ENCODE measurements at regions of chr19 and their contacts with region 1.

Region 1: GRCh38 chr19:41353466-41354342 is at the start of gene TGFB1:
- DNase-seq: peak; percentile 94 to 99 (median 98)
- ATAC-seq: peak; percentile 74
- H3K4me3 ChIP-seq: peak within 1 kb of the TSS; percentile 98
- H3K27ac ChIP-seq: peak within 1 kb of the TSS; percentile 93
- H3K4me1 ChIP-seq: peaks cover 11 to 49% of the 10 kb centered on the region in 2 experiments
- H3K27me3 ChIP-seq: no peaks in the 10 kb centered on the region
- CTCF ChIP-seq: peak; percentile 83 to 94 (median 93)
- EP300 ChIP-seq: 0 out of 2 replicates have a peak, but pooled peaks have one; percentile 23
- POLR2A ChIP-seq: peak; percentile 58
- RAD21 ChIP-seq: peak; percentile 36 to 69
- polyA plus RNA-seq, gene TGFB1: 0.24 to 0.77 TPM

Region 2: DNA sequence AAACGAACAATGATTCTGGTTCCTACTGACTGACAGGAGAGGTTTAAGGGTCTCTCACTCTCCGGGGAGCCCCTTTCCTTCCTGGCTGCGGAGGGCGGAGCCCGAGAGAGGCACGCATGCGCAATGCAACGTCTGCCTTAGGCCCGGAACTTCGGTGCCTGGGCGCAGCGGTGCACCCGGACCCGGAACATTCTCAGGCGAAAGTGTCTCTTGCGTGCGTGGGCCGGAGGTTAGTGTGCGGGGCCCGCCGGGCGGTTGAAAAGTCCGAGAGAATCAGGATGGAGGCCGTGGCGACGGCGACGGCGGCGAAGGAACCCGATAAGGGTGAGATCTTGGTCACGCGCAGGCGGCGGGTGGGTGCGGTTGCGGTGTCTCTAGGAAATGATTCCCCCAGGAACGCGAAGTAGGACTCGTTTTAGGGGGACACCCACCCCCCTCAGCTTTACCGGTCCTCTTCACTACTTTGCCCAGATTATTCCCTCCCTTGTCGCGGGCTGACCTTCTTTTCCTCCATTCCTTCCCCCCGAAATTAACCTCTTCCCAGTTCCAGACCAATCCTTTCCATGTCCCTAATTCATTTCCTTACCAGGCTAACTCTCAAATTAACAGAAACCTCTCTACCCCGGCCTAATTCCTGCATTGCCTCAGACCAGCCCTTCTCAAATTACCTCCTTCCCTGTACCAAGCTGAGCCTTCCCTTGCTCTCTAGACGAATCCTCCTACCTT is 43.5 kb before region 1 on chr19 and contains the start of gene CCDC97:
- CTCF ChIA-PET with region 1: no interaction called
- POLR2A ChIA-PET with region 1: no interaction called
- in situ Hi-C with region 1: no loop called
- intact Hi-C with region 1: loop called (anchors 5 kb)
- DNase-seq: peak; percentile 92 to 95 (median 94)
- ATAC-seq: peak; percentile 80
- H3K4me3 ChIP-seq: peak within 1 kb of the TSS; percentile 67
- H3K27ac ChIP-seq: peak within 1 kb of the TSS; percentile 88
- H3K4me1 ChIP-seq: peaks cover 11 to 12% of the 10 kb centered on the region in 2 experiments; a peak in 4 of 5 replicates
- H3K27me3 ChIP-seq: no peaks in the 10 kb centered on the region
- CTCF ChIP-seq: no peak
- EP300 ChIP-seq: peak; percentile 55
- POLR2A ChIP-seq: peak; percentile 92
- RAD21 ChIP-seq: no peak
- polyA plus RNA-seq, gene CCDC97: 0.60 to 0.79 TPM

Region 3: GRCh38 chr19:41321600-41322270 is 32.0 kb before region 1 on chr19:
- CTCF ChIA-PET with region 1: no interaction called
- POLR2A ChIA-PET with region 1: interaction called, 6 read pairs
- in situ Hi-C with region 1: no loop called
- intact Hi-C with region 1: loop called (anchors 1 kb)
- DNase-seq: peak; percentile 65 to 77 (median 68)
- ATAC-seq: peak; percentile 43
- H3K4me3 ChIP-seq: no peak overlapping the region
- H3K27ac ChIP-seq: peak overlapping the region; percentile 95; the same call in 1 of the 3 replicates
- H3K4me1 ChIP-seq: peaks cover 52 to 63% of the 10 kb centered on the region in 2 experiments
- H3K27me3 ChIP-seq: no peaks in the 10 kb centered on the region
- CTCF ChIP-seq: peak; percentile 78 to 88 (median 79)
- EP300 ChIP-seq: no peak
- POLR2A ChIP-seq: peak; percentile 23; the same call in 1 of the 2 replicates
- RAD21 ChIP-seq: peak; percentile 13 to 61; a peak in 3 of 4 replicates

Region 4: GRCh38 chr19:41363753-41364523 is 10.2 kb after region 1 on chr19 and contains the start of gene B9D2:
- CTCF ChIA-PET with region 1: no interaction called
- POLR2A ChIA-PET with region 1: interaction called, 20 read pairs
- in situ Hi-C with region 1: no loop called
- intact Hi-C with region 1: no loop called
- DNase-seq: peak; percentile 97 to 99 (median 98)
- ATAC-seq: peak; percentile 94
- H3K4me3 ChIP-seq: peak within 1 kb of the TSS; percentile 80
- H3K27ac ChIP-seq: peak within 1 kb of the TSS; percentile 100
- H3K4me1 ChIP-seq: peaks cover 30 to 46% of the 10 kb centered on the region in 2 experiments
- H3K27me3 ChIP-seq: no peaks in the 10 kb centered on the region
- CTCF ChIP-seq: peak in 1 of 3 experiments; percentile 6; a peak in 1 of 6 replicates
- EP300 ChIP-seq: no peak
- POLR2A ChIP-seq: peak; percentile 93
- RAD21 ChIP-seq: 0 out of 4 replicates have a peak, but pooled peaks of 1 of the 2 experiments have one; percentile 10
- polyA plus RNA-seq, gene B9D2: 0.83 to 1.4 TPM

Measured in K562 (cell line).